ENCODE measurements at regions of chr10 and their contacts with region 1.

Region 1: DNA sequence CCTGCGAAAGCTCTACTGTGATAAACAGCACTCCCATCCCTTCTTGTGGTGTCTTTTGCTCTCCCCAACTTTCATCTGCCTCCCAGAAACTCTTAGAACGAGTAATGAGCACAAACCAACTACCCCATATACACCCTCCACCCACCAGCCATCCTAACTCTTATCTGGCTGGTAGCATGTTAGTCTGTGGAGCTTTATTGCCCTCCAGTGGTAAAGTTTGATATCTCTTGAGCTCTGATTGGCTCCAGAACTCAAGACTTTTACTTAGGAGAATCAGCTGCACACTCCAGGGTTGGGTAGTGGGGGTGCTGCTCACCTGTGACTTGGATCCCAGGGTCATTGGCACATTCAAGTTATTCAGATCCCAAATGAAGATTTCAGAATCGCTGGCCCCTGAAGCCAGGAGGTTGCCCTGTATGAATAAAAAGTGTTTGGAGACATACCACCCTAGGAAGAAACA is 10.9 kb downstream of the SEC31B start:
- DNase-seq: peak; percentile 68
- H3K4me3 Mint-ChIP-seq: peak overlapping the region; percentile 50
- H3K27ac Mint-ChIP-seq: peak overlapping the region; percentile 89
- H3K4me1 Mint-ChIP-seq: peaks cover 70% of the 10 kb centered on the region
- H3K27me3 Mint-ChIP-seq: no peaks in the 10 kb centered on the region

Region 2: DNA sequence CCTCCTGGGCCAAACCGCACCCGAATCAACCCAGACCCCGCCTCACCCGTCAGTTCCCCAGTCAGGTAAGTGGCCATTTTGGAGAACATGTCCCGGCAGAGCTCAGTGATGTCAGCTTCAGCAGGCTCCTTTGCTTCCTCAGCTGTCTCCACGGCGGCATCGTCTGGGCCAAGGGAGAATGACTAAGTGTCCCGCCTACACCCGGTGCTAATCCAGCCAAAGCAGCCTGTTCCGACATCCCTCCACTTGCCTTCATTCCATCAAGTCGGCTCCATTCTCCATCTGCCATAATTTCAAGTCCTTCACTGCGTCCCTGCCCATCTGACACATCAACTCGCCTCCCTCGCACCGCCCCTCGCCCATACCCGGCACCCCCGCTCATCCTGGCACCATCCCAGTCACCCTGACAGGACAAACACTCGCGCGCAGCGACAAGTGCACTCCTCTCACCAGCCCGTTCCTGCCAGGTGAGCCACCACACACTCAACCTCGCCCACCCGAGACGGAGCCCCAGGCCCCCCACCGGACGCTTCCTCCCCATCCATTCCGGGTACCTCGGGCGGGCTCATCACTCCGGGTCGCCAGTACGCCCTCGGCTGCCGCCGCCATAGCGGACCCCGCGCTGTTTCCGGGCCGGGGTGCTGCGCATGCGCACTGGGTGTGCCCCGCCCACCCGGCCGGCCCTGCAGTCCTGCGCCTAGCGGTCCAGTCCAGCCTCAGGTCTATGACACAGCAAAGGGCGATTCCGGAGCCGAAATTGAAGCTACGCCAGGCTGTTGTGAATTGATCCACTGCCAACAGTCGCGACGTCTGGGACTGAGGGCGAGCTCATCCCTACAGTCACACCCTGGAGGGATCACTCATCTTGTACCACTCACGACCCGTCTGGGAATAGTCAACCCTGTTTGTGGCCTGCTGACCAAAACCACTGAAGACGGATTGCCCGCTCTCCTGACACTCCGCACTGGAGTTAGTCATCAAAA is 222.4 kb before region 1 on chr10 and contains the start of gene BLOC1S2:
- CTCF ChIA-PET with region 1: interaction called, 4 read pairs
- intact Hi-C with region 1: loop called (anchors 2 kb)
- DNase-seq: peak; percentile 87
- H3K4me3 Mint-ChIP-seq: peak within 1 kb of the TSS; percentile 99
- H3K27ac Mint-ChIP-seq: peak within 1 kb of the TSS; percentile 98
- H3K4me1 Mint-ChIP-seq: peaks cover 25% of the 10 kb centered on the region
- H3K27me3 Mint-ChIP-seq: no peaks in the 10 kb centered on the region
- total RNA-seq, gene BLOC1S2: 68.5 to 69.1 TPM

Region 3: DNA sequence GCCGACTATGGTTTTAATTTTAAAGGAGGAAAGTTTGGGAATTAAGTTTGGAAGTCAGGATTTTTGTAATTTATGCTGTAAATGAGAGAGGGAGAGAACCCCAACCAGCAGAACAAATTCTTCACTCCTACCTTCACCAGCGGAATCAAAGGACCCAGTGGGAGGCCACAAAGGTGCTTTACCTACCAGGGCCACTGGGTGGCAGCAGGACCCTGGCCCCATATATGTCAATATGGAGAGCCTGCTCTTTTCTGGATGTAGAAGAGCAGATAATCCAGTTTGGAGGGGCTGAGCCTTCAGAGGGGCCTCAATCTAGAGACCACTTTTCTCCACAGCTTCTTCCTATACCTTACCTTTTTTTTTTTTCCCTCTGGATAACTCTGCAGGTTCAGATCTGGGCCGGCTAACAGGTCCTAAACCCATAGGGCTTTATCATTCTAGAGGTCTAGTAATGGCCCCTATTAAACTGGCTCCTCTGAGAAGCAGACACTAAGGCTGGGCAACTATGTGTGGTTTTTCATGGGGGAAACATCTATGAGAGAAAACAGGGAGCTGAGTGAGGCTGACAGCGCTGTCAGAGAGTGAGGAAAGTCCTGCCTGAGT is 170.2 kb before region 1 on chr10:
- CTCF ChIA-PET with region 1: interaction called, 18 read pairs
- intact Hi-C with region 1: loop called (anchors 1 kb)
- DNase-seq: peak; percentile 91
- H3K4me3 Mint-ChIP-seq: no peak overlapping the region
- H3K27ac Mint-ChIP-seq: no peak overlapping the region
- H3K4me1 Mint-ChIP-seq: no peaks in the 10 kb centered on the region
- H3K27me3 Mint-ChIP-seq: no peaks in the 10 kb centered on the region

Region 4: GRCh38 chr10:100373298-100374136 is 135.2 kb before region 1 on chr10:
- CTCF ChIA-PET with region 1: interaction called, 4 read pairs
- intact Hi-C with region 1: loop called (anchors 1 kb)
- DNase-seq: peak; percentile 99
- H3K4me3 Mint-ChIP-seq: no peak overlapping the region
- H3K27ac Mint-ChIP-seq: no peak overlapping the region
- H3K4me1 Mint-ChIP-seq: peaks cover 30% of the 10 kb centered on the region
- H3K27me3 Mint-ChIP-seq: no peaks in the 10 kb centered on the region

Region 5: GRCh38 chr10:100481462-100482081 is 27.1 kb before region 1 on chr10:
- CTCF ChIA-PET with region 1: interaction called, 101 read pairs
- intact Hi-C with region 1: loop called (anchors 1 kb)
- DNase-seq: peak; percentile 97
- H3K4me3 Mint-ChIP-seq: peak overlapping the region; percentile 73
- H3K27ac Mint-ChIP-seq: no peak overlapping the region
- H3K4me1 Mint-ChIP-seq: peaks cover 5% of the 10 kb centered on the region
- H3K27me3 Mint-ChIP-seq: peaks cover 9% of the 10 kb centered on the region

Region 6: GRCh38 chr10:100529475-100530298 is 21.0 kb after region 1 on chr10 and contains the start of gene NDUFB8:
- CTCF ChIA-PET with region 1: interaction called, 41 read pairs
- intact Hi-C with region 1: loop called (anchors 1 kb)
- DNase-seq: peak; percentile 95
- H3K4me3 Mint-ChIP-seq: peak within 1 kb of the TSS; percentile 100
- H3K27ac Mint-ChIP-seq: peak within 1 kb of the TSS; percentile 95
- H3K4me1 Mint-ChIP-seq: peaks cover 37% of the 10 kb centered on the region
- H3K27me3 Mint-ChIP-seq: no peaks in the 10 kb centered on the region
- total RNA-seq, gene NDUFB8: 427 to 442 TPM